Mammary epithelial cell (primary cell): ENCODE measurements at regions of chr12 and their contacts with region 1.

Region 1: GRCh38 chr12:11576104-11576503 is 73.4 kb upstream of the ETV6 start:
- DNase-seq: peak; percentile 94
- H3K4me3 ChIP-seq: no peak overlapping the region
- H3K27ac ChIP-seq: peak overlapping the region; percentile 53
- H3K4me1 ChIP-seq: peaks cover 29% of the 10 kb centered on the region
- H3K27me3 ChIP-seq: no peaks in the 10 kb centered on the region
- CTCF ChIP-seq: no peak

Region 2: GRCh38 chr12:12039897-12040296 is 463.8 kb after region 1 on chr12:
- CTCF ChIA-PET with region 1: no interaction called
- dilution Hi-C with region 1: loop called (anchors 25 kb)
- in situ Hi-C with region 1: loop called (anchors 5 to 10 kb)
- intact Hi-C with region 1: no loop called
- DNase-seq: no peak
- H3K4me3 ChIP-seq: no peak overlapping the region
- H3K27ac ChIP-seq: no peak overlapping the region
- H3K4me1 ChIP-seq: no peaks in the 10 kb centered on the region
- H3K27me3 ChIP-seq: no peaks in the 10 kb centered on the region
- CTCF ChIP-seq: no peak